Activated CD8-positive, alpha-beta T cell treated with anti-CD3 and anti-CD28 coated beads, Interleukin-2, amount 10 ng/mL, durations not matched to agents 7 days and 5 days (primary cell): ENCODE measurements at regions of chr3 and their contacts with region 1.

Region 1: GRCh38 chr3:121545574-121546455 is at the start of gene POLQ:
- DNase-seq: peak; percentile 94
- ATAC-seq: peak; percentile 95
- H3K4me3 Mint-ChIP-seq: peak within 1 kb of the TSS; percentile 85
- H3K27ac Mint-ChIP-seq: peak within 1 kb of the TSS; percentile 90
- H3K4me1 Mint-ChIP-seq: peaks cover 27% of the 10 kb centered on the region
- H3K27me3 Mint-ChIP-seq: no peaks in the 10 kb centered on the region
- total RNA-seq, gene POLQ: 35.5 to 35.6 TPM

Region 2: DNA sequence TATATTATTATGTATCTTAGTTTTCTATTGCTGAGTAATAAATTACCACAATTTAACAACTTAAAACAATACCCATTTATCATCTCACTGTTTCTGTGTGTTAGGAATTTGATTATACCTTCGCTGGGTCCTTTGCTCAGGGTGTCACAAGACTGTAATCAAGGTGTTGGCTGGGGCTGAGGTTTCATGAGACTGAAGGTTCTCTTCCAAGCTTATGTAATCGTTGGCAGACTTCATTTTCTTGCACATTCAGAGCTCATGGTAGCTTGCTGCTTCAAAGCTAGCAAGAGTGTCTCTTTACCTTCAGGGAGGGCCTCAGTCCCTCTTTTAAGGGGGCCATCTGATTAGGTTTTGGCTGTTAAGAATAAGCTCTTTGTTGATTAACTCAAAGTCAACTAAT is 293.1 kb before region 1 on chr3:
- CTCF ChIA-PET with region 1: no interaction called
- POLR2A ChIA-PET with region 1: no interaction called
- DNase-seq: no peak
- ATAC-seq: no peak
- H3K4me3 Mint-ChIP-seq: no peak overlapping the region
- H3K27ac Mint-ChIP-seq: no peak overlapping the region
- H3K4me1 Mint-ChIP-seq: no peaks in the 10 kb centered on the region
- H3K27me3 Mint-ChIP-seq: no peaks in the 10 kb centered on the region

Region 3: GRCh38 chr3:121496786-121497185 is 49.0 kb before region 1 on chr3:
- CTCF ChIA-PET with region 1: no interaction called
- POLR2A ChIA-PET with region 1: no interaction called
- DNase-seq: no peak
- ATAC-seq: no peak
- H3K4me3 Mint-ChIP-seq: no peak overlapping the region
- H3K27ac Mint-ChIP-seq: no peak overlapping the region
- H3K4me1 Mint-ChIP-seq: no peaks in the 10 kb centered on the region
- H3K27me3 Mint-ChIP-seq: no peaks in the 10 kb centered on the region

Region 4: GRCh38 chr3:121677141-121677540 is 131.3 kb after region 1 on chr3:
- CTCF ChIA-PET with region 1: no interaction called
- POLR2A ChIA-PET with region 1: no interaction called
- DNase-seq: no peak
- ATAC-seq: no peak
- H3K4me3 Mint-ChIP-seq: no peak overlapping the region
- H3K27ac Mint-ChIP-seq: no peak overlapping the region
- H3K4me1 Mint-ChIP-seq: no peaks in the 10 kb centered on the region
- H3K27me3 Mint-ChIP-seq: no peaks in the 10 kb centered on the region

Region 5: GRCh38 chr3:121690777-121691405 is 145.1 kb after region 1 on chr3:
- CTCF ChIA-PET with region 1: interaction called, 10 read pairs
- POLR2A ChIA-PET with region 1: interaction called, 3 read pairs
- DNase-seq: no peak
- ATAC-seq: peak; percentile 52
- H3K4me3 Mint-ChIP-seq: no peak overlapping the region
- H3K27ac Mint-ChIP-seq: peak overlapping the region; percentile 66
- H3K4me1 Mint-ChIP-seq: peaks cover 17% of the 10 kb centered on the region
- H3K27me3 Mint-ChIP-seq: no peaks in the 10 kb centered on the region

Region 6: GRCh38 chr3:122299872-122300460 is 754.2 kb after region 1 on chr3:
- CTCF ChIA-PET with region 1: interaction called, 20 read pairs
- POLR2A ChIA-PET with region 1: interaction called, 4 read pairs
- DNase-seq: peak; percentile 69
- ATAC-seq: no peak
- H3K4me3 Mint-ChIP-seq: no peak overlapping the region
- H3K27ac Mint-ChIP-seq: no peak overlapping the region
- H3K4me1 Mint-ChIP-seq: peaks cover 29% of the 10 kb centered on the region
- H3K27me3 Mint-ChIP-seq: no peaks in the 10 kb centered on the region

Region 7: GRCh38 chr3:122392868-122393844 is 847.3 kb after region 1 on chr3:
- CTCF ChIA-PET with region 1: interaction called, 11 read pairs
- POLR2A ChIA-PET with region 1: no interaction called
- DNase-seq: peak; percentile 42
- ATAC-seq: no peak
- H3K4me3 Mint-ChIP-seq: no peak overlapping the region
- H3K27ac Mint-ChIP-seq: no peak overlapping the region
- H3K4me1 Mint-ChIP-seq: peaks cover 28% of the 10 kb centered on the region
- H3K27me3 Mint-ChIP-seq: no peaks in the 10 kb centered on the region